AG04449 (cell line): ENCODE measurements at regions of chr17 and their contacts with region 1.

Region 1: GRCh38 chr17:7280519-7281429 is 744 bp upstream of the SLC2A4 start:
- DNase-seq: no peak
- H3K4me3 ChIP-seq: peak overlapping the region; percentile 52
- CTCF ChIP-seq: peak; percentile 96

Region 2: DNA sequence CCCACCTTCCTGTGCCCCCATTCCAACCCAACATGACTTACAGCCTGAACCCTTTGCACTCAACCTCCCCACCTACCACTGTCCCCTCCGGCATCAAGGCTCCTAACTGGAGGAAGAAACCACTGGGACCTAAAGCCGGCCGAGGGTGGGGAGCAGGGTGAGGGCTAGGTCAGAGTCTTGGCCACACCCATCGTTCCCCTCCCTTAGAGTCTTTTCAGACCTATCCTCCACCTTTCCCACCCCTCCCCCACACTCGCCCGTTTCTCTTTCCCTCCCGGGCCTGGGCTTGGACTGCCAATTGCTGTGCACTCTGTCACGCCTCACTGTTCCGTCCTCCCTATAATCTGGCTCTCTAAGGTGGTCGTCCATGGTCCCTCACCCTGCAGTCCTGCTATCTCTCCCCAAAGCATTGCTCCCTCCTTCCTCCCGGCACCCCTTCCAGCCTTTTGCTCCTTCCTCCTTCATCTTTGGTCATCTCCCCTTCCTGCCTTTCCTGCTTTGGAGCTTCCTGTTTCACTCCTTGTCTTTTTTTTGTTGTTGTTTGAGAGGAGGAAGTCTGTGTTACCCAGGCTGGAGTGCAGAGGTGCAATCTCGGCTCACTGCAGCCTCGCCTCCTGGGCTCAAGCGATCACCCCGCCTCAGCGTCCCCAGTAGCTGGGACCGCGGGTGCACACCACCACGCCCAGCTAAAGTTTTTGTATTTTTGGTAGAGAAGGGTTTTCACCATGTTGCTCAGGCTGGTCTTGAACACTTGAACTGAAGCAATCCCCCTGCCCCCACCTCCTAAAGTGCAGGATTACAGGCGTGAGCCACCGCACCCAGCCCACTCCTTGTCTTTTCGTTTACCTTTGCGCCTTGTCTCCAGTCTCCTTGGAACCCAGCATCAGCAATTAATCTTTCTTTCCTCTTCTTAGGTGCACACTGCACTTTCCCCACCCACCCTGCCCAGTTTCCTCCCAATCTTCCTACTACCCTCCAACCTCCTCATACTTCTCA is 17.4 kb before region 1 on chr17:
- CTCF ChIA-PET with region 1: interaction called, 29 read pairs
- POLR2A ChIA-PET with region 1: interaction called, 4 read pairs
- DNase-seq: no peak
- H3K4me3 ChIP-seq: no peak overlapping the region
- CTCF ChIP-seq: no peak

Region 3: DNA sequence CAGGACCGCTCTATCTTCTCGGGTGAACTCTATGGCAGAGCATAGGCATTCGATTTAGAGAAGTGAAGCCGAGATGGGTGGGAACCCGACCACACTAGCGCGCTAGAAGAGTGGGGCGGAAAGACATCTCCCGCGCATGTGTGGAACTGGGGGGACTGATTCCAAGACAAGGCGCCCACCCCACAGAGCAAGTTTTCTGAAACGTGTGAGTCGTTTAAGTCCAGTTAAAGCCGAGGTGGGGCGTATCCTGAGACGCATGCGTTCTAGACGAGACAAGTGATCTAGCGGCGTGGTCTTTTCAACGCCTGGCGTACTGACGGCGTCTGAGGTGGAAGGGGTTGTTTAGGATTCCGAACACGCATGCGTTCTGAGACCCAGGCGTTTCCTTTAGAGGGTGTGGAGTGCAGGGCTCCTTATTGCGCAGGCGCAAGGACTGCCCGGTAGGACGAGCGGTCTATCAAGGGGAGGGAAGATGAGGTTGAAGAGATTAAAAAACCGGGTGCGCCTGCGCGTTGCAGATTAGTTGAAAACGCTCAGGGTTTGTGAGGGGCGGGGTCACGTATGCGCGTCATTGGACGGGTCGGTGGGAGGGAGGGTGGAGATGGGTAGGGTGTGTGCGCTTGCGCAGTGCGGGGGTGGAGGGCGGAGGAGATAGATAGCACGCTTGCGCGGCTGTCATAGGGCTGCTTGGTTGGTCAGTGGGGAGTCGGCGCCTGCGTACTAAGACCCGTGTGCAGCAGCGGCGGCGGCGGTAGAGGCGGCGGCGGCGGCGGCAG is 26.3 kb after region 1 on chr17 and contains the start of gene EIF5A:
- CTCF ChIA-PET with region 1: interaction called, 255 read pairs
- POLR2A ChIA-PET with region 1: no interaction called
- DNase-seq: peak; percentile 99
- H3K4me3 ChIP-seq: peak within 1 kb of the TSS; percentile 92
- CTCF ChIP-seq: no peak